ENCODE measurements at regions of chr7 and their contacts with region 1.

Region 1: GRCh38 chr7:149460493-149461277 is at the start of gene ZNF777:
- DNase-seq: peak; percentile 60
- H3K4me3 ChIP-seq: peak within 1 kb of the TSS; percentile 67
- H3K27ac ChIP-seq: no peak within 1 kb of the TSS
- H3K27me3 ChIP-seq: peaks cover 6% of the 10 kb centered on the region
- CTCF ChIP-seq: peak; percentile 52
- polyA plus RNA-seq, gene ZNF777: 3.4 and 3.8 TPM in 2 replicates

Region 2: GRCh38 chr7:149496642-149497391 is 36.1 kb after region 1 on chr7:
- CTCF ChIA-PET with region 1: interaction called, 5 read pairs
- POLR2A ChIA-PET with region 1: interaction called, 12 read pairs
- DNase-seq: no peak
- H3K4me3 ChIP-seq: peak overlapping the region; percentile 83
- H3K27ac ChIP-seq: peak overlapping the region; percentile 88
- H3K27me3 ChIP-seq: peaks cover 8% of the 10 kb centered on the region
- CTCF ChIP-seq: no peak

Measured in AG04450 (cell line).